ENCODE measurements at regions of chr3 and their contacts with region 1.

Region 1: DNA sequence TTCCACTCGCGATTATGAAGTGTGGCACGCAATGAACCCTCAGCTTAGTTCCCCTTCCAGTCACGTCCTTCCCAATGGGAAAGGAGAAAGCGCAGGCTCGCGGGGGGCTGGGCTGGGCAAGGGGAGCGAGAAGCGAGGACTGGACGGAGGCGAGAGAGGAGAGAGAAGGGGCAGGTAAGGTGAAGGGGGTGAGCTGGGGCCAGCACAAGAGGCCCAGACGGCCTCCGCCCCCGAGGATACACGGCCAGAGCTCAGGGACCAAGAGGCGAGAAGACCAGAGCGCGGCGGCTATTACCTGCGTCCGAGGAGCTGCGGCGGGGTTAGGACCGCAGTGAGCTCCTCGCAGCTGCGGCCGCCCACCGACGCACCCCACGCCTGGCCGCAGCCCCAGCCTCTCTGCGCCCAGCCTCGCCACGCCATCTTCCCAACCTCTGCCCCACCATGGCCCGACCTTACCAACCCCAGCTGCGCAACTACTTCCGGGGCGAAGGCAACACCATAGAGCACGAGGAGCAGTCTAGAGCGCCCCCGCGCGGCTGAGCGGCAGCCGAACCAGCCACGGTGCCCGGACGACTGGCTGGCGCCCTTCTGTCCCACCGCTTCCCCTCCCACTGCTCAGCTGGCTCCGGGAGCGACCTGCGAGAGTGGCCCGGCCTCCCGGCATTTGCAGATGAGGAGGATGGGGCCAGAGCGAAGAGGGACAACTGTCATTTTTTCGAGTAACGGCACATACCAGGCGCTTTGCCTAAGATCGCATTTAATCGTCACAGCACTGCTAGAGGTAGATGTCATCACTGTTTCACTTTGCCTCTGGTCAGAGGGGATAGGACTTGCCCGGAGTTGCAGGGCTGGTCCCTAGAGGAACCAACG is at the start of gene PARL:
- DNase-seq: peak; percentile 99
- H3K4me3 Mint-ChIP-seq: peak within 1 kb of the TSS; percentile 94
- H3K27ac Mint-ChIP-seq: peak within 1 kb of the TSS; percentile 93
- H3K4me1 Mint-ChIP-seq: peaks cover 23% of the 10 kb centered on the region
- H3K27me3 Mint-ChIP-seq: peaks cover 2% of the 10 kb centered on the region
- total RNA-seq, gene PARL: 89.5 and 91.4 TPM in 2 replicates

Region 2: DNA sequence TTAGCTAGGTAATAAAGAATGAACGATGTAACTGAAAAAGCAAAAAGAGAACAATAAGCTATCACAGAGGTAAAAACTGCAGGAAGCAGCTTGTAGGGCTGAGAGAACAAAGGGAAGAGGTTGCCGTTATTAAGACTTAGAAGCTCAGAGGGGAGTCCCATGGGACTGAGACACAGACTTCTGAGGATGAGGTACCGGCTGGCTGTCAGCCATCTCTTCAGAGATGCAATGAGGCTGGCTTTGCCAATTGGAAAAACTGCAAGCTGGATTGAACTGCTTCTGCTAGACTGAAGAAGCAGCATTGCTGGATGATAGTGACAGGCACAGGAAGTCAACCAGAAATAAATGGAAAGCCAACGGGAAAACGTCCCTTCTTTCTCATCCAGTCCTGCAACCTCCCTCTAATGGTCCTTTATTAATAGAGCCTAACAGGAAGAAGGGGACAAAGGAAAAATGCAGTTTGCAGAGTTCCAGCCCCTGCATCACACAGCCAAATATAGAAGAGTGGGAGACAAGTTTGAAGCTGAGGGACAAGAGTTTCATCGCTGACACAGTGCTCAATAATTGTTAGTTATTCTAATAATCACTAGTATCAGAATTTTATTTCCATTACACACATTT is 308.1 kb before region 1 on chr3:
- intact Hi-C with region 1: no loop called
- DNase-seq: no peak
- H3K4me3 Mint-ChIP-seq: no peak overlapping the region
- H3K27ac Mint-ChIP-seq: no peak overlapping the region
- H3K4me1 Mint-ChIP-seq: peaks cover 16% of the 10 kb centered on the region
- H3K27me3 Mint-ChIP-seq: peaks cover 16% of the 10 kb centered on the region

Region 3: DNA sequence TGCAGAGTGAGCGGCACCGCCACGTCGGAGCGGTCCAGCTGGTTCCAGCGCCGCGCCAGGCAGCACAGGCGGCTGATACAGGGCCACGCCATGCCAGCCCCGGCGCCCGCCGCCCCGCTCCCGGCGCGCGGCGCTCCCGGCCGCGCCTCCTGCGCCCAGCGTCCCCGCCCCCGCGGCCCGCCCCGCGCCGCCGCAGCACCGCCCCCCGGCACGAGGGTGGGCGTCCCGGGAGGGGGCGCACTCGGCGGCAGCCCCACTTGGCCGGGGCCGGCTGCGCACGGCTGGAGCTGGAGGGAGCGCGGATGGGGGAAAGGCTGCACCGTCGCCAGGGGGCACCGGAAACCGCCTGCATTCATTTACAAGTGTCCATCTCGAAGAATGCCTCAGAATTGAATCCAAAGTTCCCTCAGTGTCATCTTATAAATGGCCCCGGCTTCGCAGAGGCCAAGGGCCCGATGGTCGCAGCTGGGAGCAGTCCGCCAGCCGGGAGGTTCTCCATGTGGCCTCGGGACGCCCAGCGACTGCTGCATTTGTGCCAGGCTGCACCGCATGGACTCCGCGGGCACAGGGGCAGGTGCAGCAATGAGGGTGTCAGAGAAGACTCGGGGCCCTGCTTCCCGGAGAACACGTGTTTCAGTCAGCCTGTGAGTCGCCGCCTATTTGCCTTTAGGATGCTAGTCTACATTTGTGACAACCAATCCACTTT is 59.1 kb before region 1 on chr3 and contains the start of gene MAP6D1:
- intact Hi-C with region 1: loop called (anchors 2 kb)
- DNase-seq: peak; percentile 76
- H3K4me3 Mint-ChIP-seq: peak within 1 kb of the TSS; percentile 81
- H3K27ac Mint-ChIP-seq: peak within 1 kb of the TSS; percentile 11
- H3K4me1 Mint-ChIP-seq: peaks cover 12% of the 10 kb centered on the region
- H3K27me3 Mint-ChIP-seq: peaks cover 14% of the 10 kb centered on the region
- total RNA-seq, gene MAP6D1: 1.4 and 2.1 TPM in 2 replicates

Region 4: GRCh38 chr3:183924956-183925355 is 40.3 kb after region 1 on chr3:
- intact Hi-C with region 1: no loop called
- DNase-seq: no peak
- H3K4me3 Mint-ChIP-seq: no peak overlapping the region
- H3K27ac Mint-ChIP-seq: no peak overlapping the region
- H3K4me1 Mint-ChIP-seq: no peaks in the 10 kb centered on the region
- H3K27me3 Mint-ChIP-seq: no peaks in the 10 kb centered on the region

Region 5: DNA sequence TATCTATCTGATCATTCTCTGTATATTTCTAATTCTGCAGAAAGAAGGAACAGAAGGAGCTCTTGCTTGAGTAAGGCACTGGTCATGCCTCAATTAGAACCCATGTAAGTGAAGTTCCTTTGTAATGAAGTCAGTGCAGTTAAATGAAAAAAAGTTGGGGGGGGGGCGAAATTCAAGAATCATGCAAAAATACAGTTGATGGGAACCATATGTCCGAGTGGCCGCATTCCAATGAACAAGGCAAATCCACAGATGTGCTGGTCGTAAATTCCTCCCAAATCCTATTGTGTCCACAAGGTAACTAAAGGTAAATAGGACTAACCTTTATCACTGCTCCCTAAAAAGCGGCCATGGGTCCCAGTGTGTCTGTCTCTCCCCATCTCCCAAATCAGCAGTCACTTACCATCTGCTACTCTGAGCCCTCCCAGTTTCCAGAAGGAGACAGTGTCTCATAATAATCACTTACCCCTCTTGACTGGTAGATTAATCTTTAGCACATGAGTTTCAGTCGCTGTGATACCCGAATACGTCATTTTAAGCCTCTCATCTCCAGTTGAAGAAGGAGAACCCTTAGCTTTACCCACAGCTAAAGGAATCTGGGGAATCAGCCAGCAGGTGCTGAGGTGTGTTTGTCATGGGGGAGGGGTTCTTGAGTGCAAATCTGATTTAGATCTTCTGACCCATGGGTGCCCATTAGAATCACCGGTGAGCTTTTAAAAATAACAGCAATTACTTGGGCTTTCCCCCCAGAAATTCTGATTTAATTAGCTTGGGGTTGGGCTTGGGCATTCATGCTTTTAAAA is 620.6 kb after region 1 on chr3:
- intact Hi-C with region 1: no loop called
- DNase-seq: no peak
- H3K4me3 Mint-ChIP-seq: no peak overlapping the region
- H3K27ac Mint-ChIP-seq: no peak overlapping the region
- H3K4me1 Mint-ChIP-seq: no peaks in the 10 kb centered on the region
- H3K27me3 Mint-ChIP-seq: peaks cover 34% of the 10 kb centered on the region